ENCODE measurements at regions of chr6 and their contacts with region 1.

Region 1: DNA sequence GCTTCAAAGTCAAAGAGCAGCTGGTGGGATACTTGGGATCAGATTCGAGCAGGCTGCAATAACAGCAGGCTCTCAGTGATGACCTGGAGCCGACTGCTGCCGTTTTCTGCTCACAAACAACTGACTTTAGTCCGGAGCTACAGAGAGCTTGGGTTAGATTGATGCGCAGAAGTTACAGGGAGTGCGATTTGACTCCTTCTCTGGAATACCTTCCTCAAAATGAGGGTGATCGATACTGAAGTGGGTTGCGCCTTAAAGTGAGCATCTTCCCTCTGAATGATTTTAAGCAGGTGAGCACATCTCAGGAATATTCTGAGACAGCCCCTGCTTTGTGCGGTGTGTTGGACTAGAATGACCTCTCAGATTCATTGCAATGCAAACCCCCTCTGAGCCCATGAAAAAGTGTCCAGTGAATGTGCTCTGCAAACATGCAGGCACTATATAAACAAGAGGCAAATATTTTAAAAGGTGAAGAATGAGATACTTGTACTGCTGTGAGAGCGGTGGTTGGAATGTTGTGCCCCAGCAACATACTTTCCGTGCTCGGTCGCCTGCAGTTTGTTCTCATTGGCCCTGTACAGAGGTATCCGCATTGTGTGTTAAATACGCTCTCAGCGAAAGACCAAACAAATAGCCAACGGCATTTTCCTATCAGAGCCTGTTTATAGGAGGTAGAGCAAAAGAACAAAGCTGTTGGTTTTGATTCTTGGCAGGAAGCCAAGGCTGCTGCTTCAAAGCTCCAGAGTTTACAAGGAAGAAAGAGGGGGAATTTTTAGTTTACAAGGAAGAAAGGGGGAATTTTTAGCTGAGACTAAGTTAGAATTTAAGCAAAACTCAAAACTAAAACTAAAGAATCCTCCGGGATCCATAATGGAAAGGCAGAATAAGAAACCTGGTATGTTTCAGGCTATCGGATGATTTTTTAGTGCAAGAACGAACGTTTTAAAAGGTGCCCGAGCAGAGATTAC is 67.7 kb downstream of the PHACTR2 start:
- DNase-seq: no peak
- ATAC-seq: peak; percentile 20 to 43 (median 31)
- H3K4me3 ChIP-seq: peak overlapping the region; percentile 37
- H3K27ac ChIP-seq: no peak overlapping the region
- H3K4me1 ChIP-seq: peaks cover 34% of the 10 kb centered on the region
- H3K27me3 ChIP-seq: no peaks in the 10 kb centered on the region
- CTCF ChIP-seq: no peak

Region 2: DNA sequence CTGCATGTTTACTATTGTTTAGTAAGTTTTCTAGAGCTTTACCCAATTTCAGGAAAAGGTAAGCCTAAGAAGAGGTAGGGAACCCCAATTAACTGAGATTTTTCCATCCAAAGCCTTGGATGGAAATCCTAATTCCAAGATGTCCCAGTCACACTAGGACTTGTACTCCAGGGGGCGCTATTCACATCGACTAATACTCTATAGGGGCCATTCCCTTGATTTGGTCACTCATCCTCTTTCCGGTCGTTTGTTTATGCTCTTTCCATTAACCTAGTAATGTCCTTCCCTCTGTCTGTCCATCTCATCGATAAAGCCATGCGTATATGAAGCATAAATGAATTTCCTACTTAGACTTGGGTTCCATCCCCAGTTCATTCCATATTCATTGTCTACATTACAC is 153.1 kb before region 1 on chr6:
- intact Hi-C with region 1: loop called in 1 of 2 experiments (anchors 10 kb)
- DNase-seq: no peak
- ATAC-seq: no peak
- H3K4me3 ChIP-seq: no peak overlapping the region
- H3K27ac ChIP-seq: no peak overlapping the region
- H3K4me1 ChIP-seq: no peaks in the 10 kb centered on the region
- H3K27me3 ChIP-seq: no peaks in the 10 kb centered on the region
- CTCF ChIP-seq: peak; percentile 19

Measured in psoas muscle (tissue), 8 donors.